ENCODE measurements at regions of chr1 and their contacts with region 1.

Region 1: GRCh38 chr1:56831871-56832693 is 12.9 kb upstream of the FYB2 start:
- DNase-seq: peak; percentile 78
- H3K4me3 ChIP-seq: no peak overlapping the region
- H3K27ac ChIP-seq: peak overlapping the region in 3 of 4 donors; percentile 55 to 72 (median 67)
- H3K4me1 ChIP-seq: peaks cover 0 to under 1% (median 0%) of the 10 kb centered on the region in 4 donors
- H3K27me3 ChIP-seq: no peaks in the 10 kb centered on the region
- CTCF ChIP-seq: peak; percentile 74 to 95 (median 84)
- EP300 ChIP-seq: peak in 1 of 4 donors; percentile 32
- POLR2A ChIP-seq: no peak

Region 2: DNA sequence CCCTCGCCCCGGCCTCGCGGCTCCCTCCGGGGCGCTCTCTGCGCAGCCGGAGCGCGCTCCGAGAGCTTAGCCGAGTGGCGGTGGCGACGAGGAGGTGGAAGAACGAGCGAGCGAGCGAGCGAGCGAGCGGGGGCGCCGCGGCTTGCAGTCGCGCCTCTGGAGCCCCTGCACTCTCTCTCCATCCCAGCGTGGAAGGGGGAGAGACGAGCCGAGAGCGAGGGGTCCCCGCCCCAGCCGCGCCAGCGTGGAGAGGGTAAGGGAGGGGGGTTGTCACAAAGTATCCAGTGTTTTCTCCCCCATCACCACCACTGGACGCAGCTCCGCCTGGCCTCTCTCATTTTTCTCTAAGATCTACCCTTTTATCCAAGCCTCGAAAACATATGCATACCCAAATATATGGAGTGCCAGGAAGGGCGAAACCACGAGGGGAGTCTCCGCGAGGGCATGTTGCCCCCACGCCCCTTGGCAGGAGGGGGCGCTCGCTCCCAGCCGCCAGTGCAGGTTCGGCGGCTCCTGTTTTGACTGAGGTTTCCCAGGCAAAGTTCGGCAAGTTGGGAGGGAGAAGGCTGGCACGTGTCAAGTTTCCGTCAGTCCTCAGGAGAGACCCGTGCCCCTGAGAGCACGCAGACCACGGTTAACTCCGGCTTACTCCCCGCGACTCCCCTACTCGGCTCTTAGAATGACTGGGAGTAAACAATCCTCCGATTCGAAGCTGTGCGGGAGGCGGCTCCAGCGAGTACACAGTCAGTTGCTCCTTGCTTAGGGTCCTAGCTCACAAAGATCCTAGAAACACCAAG is 592.3 kb after region 1 on chr1:
- intact Hi-C with region 1: loop called (anchors 10 kb)
- DNase-seq: no peak
- H3K4me3 ChIP-seq: peak overlapping the region; percentile 28 to 51 (median 46)
- H3K27ac ChIP-seq: no peak overlapping the region
- H3K4me1 ChIP-seq: peaks cover 0 to 30% (median 28%) of the 10 kb centered on the region in 4 donors
- H3K27me3 ChIP-seq: peaks cover 19 to 66% (median 46%) of the 10 kb centered on the region in 3 donors
- CTCF ChIP-seq: peak in 2 of 4 experiments; percentile 40 to 52
- EP300 ChIP-seq: no peak
- POLR2A ChIP-seq: no peak

Region 3: DNA sequence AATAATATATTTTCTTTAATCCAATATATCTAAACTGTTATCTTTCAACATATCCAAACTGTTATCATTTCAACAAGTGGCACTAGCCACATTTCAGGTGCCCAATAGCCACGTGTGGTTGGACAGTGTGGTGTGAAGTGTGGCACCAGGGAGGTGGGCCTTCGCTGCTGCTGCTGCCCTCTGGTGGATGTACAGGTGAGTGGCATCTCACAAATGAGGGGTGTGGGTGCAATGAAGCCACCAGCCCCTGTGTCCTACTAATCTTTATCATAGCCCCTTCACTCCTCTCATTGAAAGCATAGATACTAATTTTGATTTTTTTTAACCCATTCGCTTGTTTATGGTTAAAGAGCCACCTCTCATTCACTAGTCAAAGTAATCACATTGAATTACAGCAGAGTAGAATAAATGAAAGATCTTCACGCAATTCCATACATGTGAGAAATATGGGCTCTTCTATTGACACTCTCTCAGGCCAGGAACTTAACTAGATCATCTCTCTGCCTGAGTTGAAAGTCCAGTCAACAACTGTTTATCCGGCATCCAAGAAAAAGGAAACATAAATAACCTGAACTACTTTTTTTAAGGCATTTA is 1215.3 kb after region 1 on chr1:
- intact Hi-C with region 1: loop called (anchors 5 kb)
- DNase-seq: no peak
- H3K4me3 ChIP-seq: no peak overlapping the region
- H3K27ac ChIP-seq: no peak overlapping the region
- H3K4me1 ChIP-seq: no peaks in the 10 kb centered on the region
- H3K27me3 ChIP-seq: no peaks in the 10 kb centered on the region
- CTCF ChIP-seq: peak in 3 of 4 experiments; percentile 51 to 64 (median 53)
- EP300 ChIP-seq: no peak
- POLR2A ChIP-seq: no peak

Region 4: GRCh38 chr1:58162952-58163550 is 1331.0 kb after region 1 on chr1:
- intact Hi-C with region 1: loop called (anchors 2 kb)
- DNase-seq: peak; percentile 66
- H3K4me3 ChIP-seq: no peak overlapping the region
- H3K27ac ChIP-seq: no peak overlapping the region
- H3K4me1 ChIP-seq: peaks cover 0 to 5% (median 0%) of the 10 kb centered on the region in 4 donors
- H3K27me3 ChIP-seq: no peaks in the 10 kb centered on the region
- CTCF ChIP-seq: peak in 3 of 4 experiments; percentile 63 to 86 (median 71)
- EP300 ChIP-seq: no peak
- POLR2A ChIP-seq: no peak

Region 5: GRCh38 chr1:58546520-58547308 is 1714.6 kb after region 1 on chr1 and contains the start of gene OMA1:
- intact Hi-C with region 1: loop called (anchors 10 kb)
- DNase-seq: peak; percentile 99
- H3K4me3 ChIP-seq: peak within 1 kb of the TSS; percentile 76 to 93 (median 86)
- H3K27ac ChIP-seq: peak within 1 kb of the TSS; percentile 98 to 100 (median 100)
- H3K4me1 ChIP-seq: peaks cover 0 to 35% (median 14%) of the 10 kb centered on the region in 4 donors
- H3K27me3 ChIP-seq: no peaks in the 10 kb centered on the region
- CTCF ChIP-seq: peak; percentile 90 to 98 (median 96)
- EP300 ChIP-seq: peak in 1 of 4 donors; percentile 71
- POLR2A ChIP-seq: peak; percentile 77 to 88
- total RNA-seq, gene OMA1: 34.3 to 74.9 (median 61.4) TPM

Region 6: DNA sequence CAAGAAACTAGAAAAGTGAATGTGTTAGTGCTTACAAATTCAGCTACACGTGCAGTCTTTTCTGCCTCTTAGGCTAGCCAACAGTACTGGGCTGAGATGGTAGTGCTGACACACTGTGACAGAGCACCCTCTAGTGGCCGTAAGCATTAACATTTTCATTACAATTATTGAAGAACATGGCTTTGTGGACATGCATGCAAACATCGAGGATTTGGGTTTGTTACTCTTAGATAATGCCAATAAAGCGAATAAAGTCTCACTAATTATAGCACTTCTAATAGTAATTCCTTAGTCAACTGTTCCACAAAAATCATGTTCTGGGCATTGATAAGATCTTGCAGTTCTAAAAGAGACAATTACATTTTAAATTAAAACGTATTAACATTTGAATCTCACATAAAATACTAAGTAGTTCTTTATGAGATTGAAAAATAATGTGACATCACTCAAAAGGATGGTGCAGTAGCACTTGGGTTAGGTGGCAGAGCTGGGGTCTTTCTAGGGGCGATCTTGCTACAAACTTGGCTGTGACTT is 1820.6 kb after region 1 on chr1:
- intact Hi-C with region 1: loop called (anchors 10 kb)
- DNase-seq: peak; percentile 74
- H3K4me3 ChIP-seq: no peak overlapping the region
- H3K27ac ChIP-seq: peak overlapping the region in 1 of 4 donors; percentile 23
- H3K4me1 ChIP-seq: peaks cover 0 to 10% (median 5%) of the 10 kb centered on the region in 4 donors
- H3K27me3 ChIP-seq: no peaks in the 10 kb centered on the region
- CTCF ChIP-seq: peak; percentile 55 to 79 (median 76)
- EP300 ChIP-seq: no peak
- POLR2A ChIP-seq: no peak